ENCODE measurements at regions of chr13 and their contacts with region 1.

Region 1: GRCh38 chr13:106536244-106537034 is 977 bp upstream of the EFNB2 start:
- DNase-seq: peak; percentile 59 to 72
- ATAC-seq: peak; percentile 55 to 58
- H3K4me3 ChIP-seq: peak overlapping the region; percentile 68 to 93 (median 80)
- H3K27ac ChIP-seq: peak overlapping the region; percentile 71 to 75 (median 74)
- H3K4me1 ChIP-seq: peaks cover 8 to 25% of the 10 kb centered on the region in 2 donors
- H3K27me3 ChIP-seq: no peaks in the 10 kb centered on the region
- CTCF ChIP-seq: peak; percentile 90 to 97 (median 91)
- POLR2A ChIP-seq: no peak

Region 2: GRCh38 chr13:104571161-104571892 is 1965.1 kb before region 1 on chr13:
- in situ Hi-C with region 1: loop called in 1 of 4 experiments (anchors 25 kb)
- intact Hi-C with region 1: loop called (anchors 2 kb)
- DNase-seq: peak; percentile 34 to 64
- ATAC-seq: peak; percentile 96
- H3K4me3 ChIP-seq: no peak overlapping the region
- H3K27ac ChIP-seq: peak overlapping the region in 2 of 4 donors; percentile 50 to 68
- H3K4me1 ChIP-seq: peaks cover 6 to 13% of the 10 kb centered on the region in 2 donors
- H3K27me3 ChIP-seq: no peaks in the 10 kb centered on the region
- CTCF ChIP-seq: peak in 4 of 5 experiments; percentile 36 to 55 (median 48)
- POLR2A ChIP-seq: no peak

Region 3: GRCh38 chr13:105410602-105411001 is 1125.8 kb before region 1 on chr13:
- in situ Hi-C with region 1: loop called in 3 of 4 experiments (anchors 25 kb)
- intact Hi-C with region 1: no loop called
- DNase-seq: peak in 1 of 2 donors; percentile 19
- ATAC-seq: no peak
- H3K4me3 ChIP-seq: no peak overlapping the region
- H3K27ac ChIP-seq: no peak overlapping the region
- H3K4me1 ChIP-seq: no peaks in the 10 kb centered on the region
- H3K27me3 ChIP-seq: no peaks in the 10 kb centered on the region
- CTCF ChIP-seq: peak in 3 of 5 experiments; percentile 14 to 57 (median 45)
- POLR2A ChIP-seq: no peak

Region 4: GRCh38 chr13:106083620-106084350 is 452.7 kb before region 1 on chr13:
- in situ Hi-C with region 1: no loop called
- intact Hi-C with region 1: loop called (anchors 5 kb)
- DNase-seq: no peak
- ATAC-seq: no peak
- H3K4me3 ChIP-seq: no peak overlapping the region
- H3K27ac ChIP-seq: no peak overlapping the region
- H3K4me1 ChIP-seq: no peaks in the 10 kb centered on the region
- H3K27me3 ChIP-seq: no peaks in the 10 kb centered on the region
- CTCF ChIP-seq: peak in 3 of 5 experiments; percentile 13 to 49 (median 33)
- POLR2A ChIP-seq: no peak

Region 5: GRCh38 chr13:106567474-106568298 is 31.2 kb after region 1 on chr13 and contains the start of gene ARGLU1:
- in situ Hi-C with region 1: no loop called
- intact Hi-C with region 1: loop called (anchors 2 kb)
- DNase-seq: peak; percentile 84 to 86
- ATAC-seq: peak; percentile 88
- H3K4me3 ChIP-seq: peak within 1 kb of the TSS; percentile 92 to 98 (median 97)
- H3K27ac ChIP-seq: peak within 1 kb of the TSS; percentile 92 to 98 (median 94)
- H3K4me1 ChIP-seq: peaks cover 39 to 46% of the 10 kb centered on the region in 2 donors
- H3K27me3 ChIP-seq: no peaks in the 10 kb centered on the region
- CTCF ChIP-seq: no peak
- POLR2A ChIP-seq: peak; percentile 94 to 95
- total RNA-seq, gene ARGLU1: 10.0 to 41.1 (median 12.9) TPM

Region 6: DNA sequence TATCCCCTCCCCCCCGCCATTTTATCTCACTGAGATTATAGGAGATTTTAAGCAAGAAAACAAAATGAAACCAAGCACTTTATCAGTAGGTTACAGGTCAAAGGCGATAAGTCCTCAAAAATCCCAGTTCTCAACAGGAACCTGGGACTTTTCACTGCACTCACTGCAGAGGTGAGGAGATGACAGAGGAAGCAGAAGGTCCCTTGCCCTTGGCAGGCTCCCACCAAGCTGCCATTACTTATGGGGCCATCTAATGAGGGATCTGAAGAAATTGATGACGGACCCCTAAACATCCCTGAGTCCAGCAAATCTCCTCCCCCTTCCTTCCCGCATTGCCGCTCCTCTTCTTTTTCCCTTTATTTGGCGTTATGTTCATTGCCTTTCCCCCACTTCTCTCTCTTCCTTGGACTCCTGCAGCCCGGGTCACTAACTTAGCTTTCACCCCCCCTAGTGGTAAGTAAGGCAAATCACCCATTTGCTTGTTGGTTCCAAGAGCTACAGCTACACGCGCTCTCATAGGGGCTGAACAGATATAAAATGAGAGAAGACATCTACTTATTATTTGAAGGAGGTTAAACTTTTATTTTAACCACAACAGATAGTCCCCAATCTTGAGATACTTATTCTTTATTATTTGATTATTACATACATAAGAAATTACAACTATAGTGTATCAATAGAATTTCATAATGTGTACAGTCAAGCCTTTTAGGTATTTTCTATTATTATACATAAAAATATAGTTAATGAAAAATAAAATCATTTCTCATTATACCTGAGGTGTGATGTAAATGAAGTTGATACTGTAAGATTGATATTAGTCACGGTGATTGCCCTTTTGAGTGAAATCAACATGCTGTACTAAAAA is 83.5 kb after region 1 on chr13:
- in situ Hi-C with region 1: no loop called
- intact Hi-C with region 1: loop called (anchors 5 kb)
- DNase-seq: peak; percentile 14 to 16
- ATAC-seq: peak; percentile 73 to 91
- H3K4me3 ChIP-seq: no peak overlapping the region
- H3K27ac ChIP-seq: peak overlapping the region in 2 of 4 donors; percentile 27 to 32
- H3K4me1 ChIP-seq: no peaks in the 10 kb centered on the region
- H3K27me3 ChIP-seq: peaks cover 0 to 4% (median 0%) of the 10 kb centered on the region in 3 donors
- CTCF ChIP-seq: peak; percentile 52 to 73 (median 60)
- POLR2A ChIP-seq: no peak

Region 7: GRCh38 chr13:107124129-107124718 is 587.8 kb after region 1 on chr13:
- in situ Hi-C with region 1: no loop called
- intact Hi-C with region 1: loop called (anchors 10 kb)
- DNase-seq: no peak
- ATAC-seq: no peak
- H3K4me3 ChIP-seq: no peak overlapping the region
- H3K27ac ChIP-seq: no peak overlapping the region
- H3K4me1 ChIP-seq: no peaks in the 10 kb centered on the region
- H3K27me3 ChIP-seq: no peaks in the 10 kb centered on the region
- CTCF ChIP-seq: peak in 4 of 5 experiments; percentile 19 to 56 (median 42)
- POLR2A ChIP-seq: no peak